Body of pancreas (tissue), 4 donors: ENCODE measurements at regions of chr21 and their contacts with region 1.

Region 1: DNA sequence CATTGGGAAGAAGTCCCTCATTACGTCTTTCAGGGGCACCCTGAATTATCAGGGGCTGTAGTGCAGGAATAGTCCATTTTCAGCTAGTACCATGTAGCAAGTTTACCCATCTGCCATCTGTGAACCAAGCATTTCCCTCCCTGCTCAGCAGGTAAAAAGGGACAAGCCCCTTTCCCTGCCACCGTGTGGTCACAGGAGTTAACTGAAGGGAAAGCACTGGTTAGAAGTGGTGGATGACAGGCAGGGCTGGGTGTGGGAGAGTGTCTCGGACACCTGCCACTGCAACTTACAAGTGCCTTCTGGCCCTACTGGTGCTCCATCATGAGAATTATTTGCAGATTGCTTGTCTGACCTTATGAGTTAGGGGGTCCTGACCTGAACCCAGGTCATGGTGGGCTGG is 32.0 kb upstream of the IGSF5 start:
- DNase-seq: peak in 2 of 4 donors; percentile 20 to 25
- ATAC-seq: peak; percentile 40
- H3K4me3 ChIP-seq: no peak overlapping the region
- H3K27ac ChIP-seq: no peak overlapping the region
- H3K4me1 ChIP-seq: peaks cover 12% of the 10 kb centered on the region
- H3K27me3 ChIP-seq: no peaks in the 10 kb centered on the region
- CTCF ChIP-seq: peak in 3 of 7 experiments; percentile 5 to 37 (median 15)
- POLR2A ChIP-seq: no peak

Region 2: DNA sequence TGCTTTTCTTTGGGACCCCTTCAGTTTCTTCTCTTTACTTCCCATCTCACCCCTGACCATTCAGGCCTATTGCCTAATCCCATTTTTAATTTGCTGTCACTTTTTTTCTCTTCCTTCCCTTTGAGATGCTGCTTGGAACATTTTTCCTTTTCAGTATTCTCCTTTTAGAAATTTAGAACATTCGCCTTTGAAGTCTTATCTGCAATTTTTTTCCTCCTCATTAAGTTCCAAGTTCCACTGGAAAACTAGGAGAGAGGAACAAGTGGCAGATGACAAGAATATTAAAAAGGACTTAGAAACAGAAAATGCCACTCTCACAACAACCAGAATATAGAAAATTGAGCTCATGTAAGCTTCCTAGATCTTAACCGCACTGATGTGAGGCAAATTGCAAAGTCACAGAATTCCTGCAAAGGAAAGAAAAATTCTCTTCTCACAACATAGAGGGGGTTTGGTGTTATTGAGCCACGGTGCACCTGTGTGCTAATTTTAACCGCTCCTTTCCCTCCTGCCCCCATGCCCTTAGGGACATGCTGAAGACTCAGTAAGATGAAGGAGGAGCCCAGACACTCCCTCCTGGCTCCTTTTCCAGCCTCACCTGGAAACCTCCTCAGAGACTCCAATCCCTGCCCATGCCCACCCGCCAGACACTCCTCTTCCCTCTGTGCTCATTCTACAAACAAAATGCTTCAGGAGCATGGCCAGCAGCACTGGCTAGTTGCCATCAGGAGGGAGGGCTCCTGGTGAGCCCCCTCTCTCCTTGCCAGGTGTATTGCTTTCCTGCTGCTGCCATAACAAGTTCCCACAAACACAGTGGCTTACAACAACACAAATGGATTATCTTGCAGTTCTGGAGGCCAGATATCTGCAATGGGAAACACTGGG is 656.1 kb before region 1 on chr21:
- intact Hi-C with region 1: no loop called
- DNase-seq: no peak
- ATAC-seq: no peak
- H3K4me3 ChIP-seq: no peak overlapping the region
- H3K27ac ChIP-seq: no peak overlapping the region
- H3K4me1 ChIP-seq: no peaks in the 10 kb centered on the region
- H3K27me3 ChIP-seq: no peaks in the 10 kb centered on the region
- CTCF ChIP-seq: no peak
- POLR2A ChIP-seq: no peak

Region 3: GRCh38 chr21:39527664-39528381 is 185.1 kb before region 1 on chr21:
- intact Hi-C with region 1: loop called (anchors 5 kb)
- DNase-seq: peak; percentile 76 to 85 (median 80)
- ATAC-seq: peak; percentile 65
- H3K4me3 ChIP-seq: no peak overlapping the region
- H3K27ac ChIP-seq: peak overlapping the region in 3 of 4 donors; percentile 65 to 81 (median 73)
- H3K4me1 ChIP-seq: peaks cover 60% of the 10 kb centered on the region
- H3K27me3 ChIP-seq: no peaks in the 10 kb centered on the region
- CTCF ChIP-seq: no peak
- POLR2A ChIP-seq: no peak

Region 4: GRCh38 chr21:39776589-39776988 is 63.6 kb after region 1 on chr21:
- intact Hi-C with region 1: no loop called
- DNase-seq: no peak
- ATAC-seq: no peak
- H3K4me3 ChIP-seq: no peak overlapping the region
- H3K27ac ChIP-seq: no peak overlapping the region
- H3K4me1 ChIP-seq: no peaks in the 10 kb centered on the region
- H3K27me3 ChIP-seq: no peaks in the 10 kb centered on the region
- CTCF ChIP-seq: no peak
- POLR2A ChIP-seq: no peak

Region 5: GRCh38 chr21:39874759-39875158 is 161.8 kb after region 1 on chr21:
- intact Hi-C with region 1: no loop called
- DNase-seq: no peak
- ATAC-seq: no peak
- H3K4me3 ChIP-seq: no peak overlapping the region
- H3K27ac ChIP-seq: no peak overlapping the region
- H3K4me1 ChIP-seq: no peaks in the 10 kb centered on the region
- H3K27me3 ChIP-seq: no peaks in the 10 kb centered on the region
- CTCF ChIP-seq: no peak
- POLR2A ChIP-seq: no peak